ENCODE measurements at regions of chr15 and their contacts with region 1.

Region 1: GRCh38 chr15:56496635-56497034 is 31.7 kb upstream of the MNS1 start:
- DNase-seq: no peak
- ATAC-seq: peak; percentile 75

Region 2: GRCh38 chr15:56805466-56806146 is 309.0 kb after region 1 on chr15:
- intact Hi-C with region 1: no loop called
- DNase-seq: no peak
- ATAC-seq: peak; percentile 64

Region 3: DNA sequence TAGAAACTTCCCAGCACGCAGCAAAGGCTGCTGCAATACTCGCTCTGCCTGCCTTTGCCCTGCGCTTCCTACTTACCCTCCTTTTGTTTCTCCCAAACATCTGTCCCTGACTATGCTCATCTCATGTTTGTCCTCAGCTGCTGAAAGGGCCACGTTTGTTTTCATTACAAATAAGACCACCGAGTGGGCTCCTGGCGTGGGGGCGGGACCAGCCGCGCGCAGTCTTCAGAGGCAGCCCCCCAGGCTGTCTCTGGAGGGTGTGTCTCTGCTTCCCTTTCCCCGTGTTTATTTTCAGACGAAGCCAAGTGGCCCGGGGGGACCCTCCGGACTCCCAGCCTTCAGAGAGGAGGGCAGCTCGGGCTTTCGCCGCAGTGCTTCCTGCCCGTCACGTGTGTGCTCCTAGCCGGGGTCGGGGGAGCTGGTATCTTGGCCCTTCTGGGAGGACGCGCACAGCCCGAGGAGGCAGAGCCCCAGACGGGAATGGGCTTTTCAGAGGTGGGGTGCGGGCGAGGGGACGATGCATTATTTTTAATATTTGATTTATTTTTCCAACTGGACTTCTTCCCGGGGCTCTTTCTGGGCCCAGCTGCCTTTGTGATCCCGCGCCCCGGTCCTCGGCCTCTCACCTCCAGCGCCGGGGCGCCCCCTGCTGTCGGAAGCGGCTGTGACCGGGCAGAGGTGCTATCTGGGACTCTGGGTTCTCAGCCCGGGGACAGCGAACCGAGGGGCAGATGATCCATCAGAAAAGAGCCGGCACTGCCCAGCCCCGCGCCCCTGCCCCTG is 809.7 kb after region 1 on chr15:
- intact Hi-C with region 1: loop called (anchors 2 kb)
- DNase-seq: peak; percentile 95
- ATAC-seq: peak; percentile 88